HCT116 (cell line): ENCODE measurements at regions of chr1 and their contacts with region 1.

Region 1: GRCh38 chr1:78839704-78840277 is 166.7 kb downstream of the ADGRL4 start:
- DNase-seq: peak; percentile 31
- ATAC-seq: peak; percentile 70
- H3K4me3 ChIP-seq: no peak overlapping the region
- H3K27ac ChIP-seq: no peak overlapping the region
- H3K4me1 ChIP-seq: no peaks in the 10 kb centered on the region
- H3K27me3 ChIP-seq: no peaks in the 10 kb centered on the region
- CTCF ChIP-seq: peak; percentile 40 to 71 (median 50); a peak in 5 of 6 replicates
- POLR2A ChIP-seq: no peak
- RAD21 ChIP-seq: peak; percentile 71

Region 2: GRCh38 chr1:79197421-79197820 is 357.6 kb after region 1 on chr1:
- CTCF ChIA-PET with region 1: interaction called, 21 read pairs
- POLR2A ChIA-PET with region 1: interaction called, 4 read pairs
- RAD21 ChIA-PET with region 1: interaction called in 1 of 2 experiments, 5 read pairs
- intact Hi-C with region 1: no loop called
- DNase-seq: peak; percentile 22
- ATAC-seq: no peak
- H3K4me3 ChIP-seq: no peak overlapping the region
- H3K27ac ChIP-seq: no peak overlapping the region
- H3K4me1 ChIP-seq: peaks cover 3 to 15% of the 10 kb centered on the region in 2 experiments
- H3K27me3 ChIP-seq: no peaks in the 10 kb centered on the region
- CTCF ChIP-seq: peak in 2 of 3 experiments; percentile 20 to 33; a peak in 2 of 6 replicates
- POLR2A ChIP-seq: no peak
- RAD21 ChIP-seq: peak; percentile 58

Region 3: GRCh38 chr1:79259388-79260336 is 419.9 kb after region 1 on chr1:
- CTCF ChIA-PET with region 1: no interaction called
- POLR2A ChIA-PET with region 1: no interaction called
- RAD21 ChIA-PET with region 1: no interaction called
- intact Hi-C with region 1: loop called (anchors 5 kb)
- DNase-seq: no peak
- ATAC-seq: peak; percentile 53; the same call in 1 of the 2 replicates
- H3K4me3 ChIP-seq: no peak overlapping the region
- H3K27ac ChIP-seq: no peak overlapping the region
- H3K4me1 ChIP-seq: no peaks in the 10 kb centered on the region
- H3K27me3 ChIP-seq: no peaks in the 10 kb centered on the region
- CTCF ChIP-seq: peak; percentile 21 to 52 (median 30); a peak in 4 of 6 replicates
- POLR2A ChIP-seq: no peak
- RAD21 ChIP-seq: peak; percentile 52

Region 4: GRCh38 chr1:79353224-79353623 is 513.4 kb after region 1 on chr1:
- CTCF ChIA-PET with region 1: interaction called, 7 read pairs
- POLR2A ChIA-PET with region 1: no interaction called
- RAD21 ChIA-PET with region 1: no interaction called
- intact Hi-C with region 1: loop called (anchors 2 kb)
- DNase-seq: peak; percentile 37
- ATAC-seq: peak; percentile 79
- H3K4me3 ChIP-seq: no peak overlapping the region
- H3K27ac ChIP-seq: no peak overlapping the region
- H3K4me1 ChIP-seq: no peaks in the 10 kb centered on the region
- H3K27me3 ChIP-seq: no peaks in the 10 kb centered on the region
- CTCF ChIP-seq: peak; percentile 19 to 57 (median 47); a peak in 5 of 6 replicates
- POLR2A ChIP-seq: no peak
- RAD21 ChIP-seq: peak; percentile 46

Region 5: GRCh38 chr1:79478160-79478559 is 638.4 kb after region 1 on chr1:
- CTCF ChIA-PET with region 1: no interaction called
- POLR2A ChIA-PET with region 1: no interaction called
- RAD21 ChIA-PET with region 1: no interaction called
- intact Hi-C with region 1: loop called (anchors 10 kb)
- DNase-seq: no peak
- ATAC-seq: no peak
- H3K4me3 ChIP-seq: no peak overlapping the region
- H3K27ac ChIP-seq: no peak overlapping the region
- H3K4me1 ChIP-seq: no peaks in the 10 kb centered on the region
- H3K27me3 ChIP-seq: no peaks in the 10 kb centered on the region
- CTCF ChIP-seq: no peak
- POLR2A ChIP-seq: no peak
- RAD21 ChIP-seq: no peak

Region 6: DNA sequence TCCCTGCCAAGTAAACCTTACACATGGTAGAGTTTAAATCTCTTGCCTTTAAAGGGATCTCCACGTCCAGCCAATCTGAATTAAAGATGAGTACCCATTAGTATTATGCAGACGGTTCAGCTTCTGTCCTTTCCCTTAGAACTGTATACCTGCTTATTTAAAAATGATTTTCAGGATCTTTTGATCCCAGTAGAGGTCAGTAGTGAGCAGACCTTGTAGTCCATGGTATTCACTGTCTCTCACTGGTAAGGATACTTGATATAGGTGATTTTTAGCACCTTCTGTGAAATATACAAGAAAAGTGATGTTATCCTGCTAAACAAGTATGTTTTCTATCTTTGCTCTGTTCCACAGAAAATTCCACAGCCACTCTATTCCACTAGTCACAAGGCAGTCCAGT is 1378.3 kb after region 1 on chr1:
- CTCF ChIA-PET with region 1: no interaction called
- POLR2A ChIA-PET with region 1: no interaction called
- RAD21 ChIA-PET with region 1: no interaction called
- intact Hi-C with region 1: loop called (anchors 5 kb)
- DNase-seq: peak; percentile 54
- ATAC-seq: peak; percentile 92
- H3K4me3 ChIP-seq: no peak overlapping the region
- H3K27ac ChIP-seq: no peak overlapping the region
- H3K4me1 ChIP-seq: no peaks in the 10 kb centered on the region
- H3K27me3 ChIP-seq: no peaks in the 10 kb centered on the region
- CTCF ChIP-seq: peak; percentile 26 to 60 (median 52); a peak in 5 of 6 replicates
- POLR2A ChIP-seq: no peak
- RAD21 ChIP-seq: peak; percentile 48